Activated T-helper 1 cell treated with anti-CD3 and anti-CD28 coated beads, Interleukin-12 subunit alpha, Interleukin-12 subunit beta, Interleukin-2, Interleukin-4 antibody, amounts not matched to agents 30 ng/mL and 10 ng/mL and 1 ng/mL, durations not matched to agents 14 hours and 24 hours and 36 hours (primary cell): ENCODE measurements at regions of chr19 and their contacts with region 1.

Region 1: GRCh38 chr19:54882758-54883157 is 8.7 kb downstream of the FCAR start:
- DNase-seq: peak; percentile 4
- H3K4me3 Mint-ChIP-seq: peak overlapping the region; percentile 56
- H3K27ac Mint-ChIP-seq: no peak overlapping the region
- H3K4me1 Mint-ChIP-seq: peaks cover 12% of the 10 kb centered on the region
- H3K27me3 Mint-ChIP-seq: peaks cover 5% of the 10 kb centered on the region

Region 2: GRCh38 chr19:54439174-54439853 is 443.4 kb before region 1 on chr19:
- intact Hi-C with region 1: no loop called
- DNase-seq: no peak
- H3K4me3 Mint-ChIP-seq: no peak overlapping the region
- H3K27ac Mint-ChIP-seq: no peak overlapping the region
- H3K4me1 Mint-ChIP-seq: peaks cover 7% of the 10 kb centered on the region
- H3K27me3 Mint-ChIP-seq: no peaks in the 10 kb centered on the region

Region 3: DNA sequence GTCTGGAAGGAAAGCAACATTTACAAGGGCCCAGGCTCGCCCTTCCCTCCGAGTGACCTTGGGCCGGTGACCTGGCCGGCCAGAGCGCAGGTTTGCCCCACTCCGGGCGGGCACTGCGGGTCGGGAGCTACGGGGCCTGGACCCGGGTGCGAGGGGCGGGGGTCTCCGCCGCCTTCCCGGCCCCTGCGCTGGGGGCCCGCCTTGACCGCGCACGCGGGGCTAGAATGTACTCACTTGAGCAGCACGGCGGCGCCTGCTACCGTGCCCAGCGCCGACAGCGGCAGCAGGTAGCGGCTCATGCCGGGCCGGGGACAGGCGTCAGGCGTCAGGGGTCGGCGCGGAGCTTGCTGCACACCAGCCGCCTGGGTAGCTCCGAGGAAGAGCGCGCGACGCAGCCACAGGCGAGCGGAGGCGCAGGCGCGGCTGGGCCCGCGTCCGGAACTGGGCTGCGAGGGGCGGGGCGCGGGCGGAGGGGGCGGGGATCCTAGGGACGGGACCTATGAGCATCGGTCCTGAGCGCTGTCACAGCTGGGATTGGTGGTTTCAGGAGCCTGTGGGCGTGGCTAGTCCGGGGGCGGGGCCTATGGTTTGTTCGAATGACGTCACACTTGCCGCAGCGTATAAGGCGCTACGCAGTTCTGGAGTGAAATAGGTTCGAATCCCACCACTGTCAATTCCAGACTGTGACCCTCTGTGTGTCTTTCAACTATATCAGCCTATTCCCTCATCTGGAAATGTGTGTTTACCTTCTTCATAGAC is 180.2 kb after region 1 on chr19 and contains the start of gene RDH13:
- intact Hi-C with region 1: loop called (anchors 5 kb)
- DNase-seq: peak; percentile 96
- H3K4me3 Mint-ChIP-seq: peak within 1 kb of the TSS; percentile 89
- H3K27ac Mint-ChIP-seq: peak within 1 kb of the TSS; percentile 75
- H3K4me1 Mint-ChIP-seq: peaks cover 12% of the 10 kb centered on the region
- H3K27me3 Mint-ChIP-seq: peaks cover 18% of the 10 kb centered on the region
- total RNA-seq, gene RDH13: 21.7 and 26.4 TPM in 2 replicates

Region 4: DNA sequence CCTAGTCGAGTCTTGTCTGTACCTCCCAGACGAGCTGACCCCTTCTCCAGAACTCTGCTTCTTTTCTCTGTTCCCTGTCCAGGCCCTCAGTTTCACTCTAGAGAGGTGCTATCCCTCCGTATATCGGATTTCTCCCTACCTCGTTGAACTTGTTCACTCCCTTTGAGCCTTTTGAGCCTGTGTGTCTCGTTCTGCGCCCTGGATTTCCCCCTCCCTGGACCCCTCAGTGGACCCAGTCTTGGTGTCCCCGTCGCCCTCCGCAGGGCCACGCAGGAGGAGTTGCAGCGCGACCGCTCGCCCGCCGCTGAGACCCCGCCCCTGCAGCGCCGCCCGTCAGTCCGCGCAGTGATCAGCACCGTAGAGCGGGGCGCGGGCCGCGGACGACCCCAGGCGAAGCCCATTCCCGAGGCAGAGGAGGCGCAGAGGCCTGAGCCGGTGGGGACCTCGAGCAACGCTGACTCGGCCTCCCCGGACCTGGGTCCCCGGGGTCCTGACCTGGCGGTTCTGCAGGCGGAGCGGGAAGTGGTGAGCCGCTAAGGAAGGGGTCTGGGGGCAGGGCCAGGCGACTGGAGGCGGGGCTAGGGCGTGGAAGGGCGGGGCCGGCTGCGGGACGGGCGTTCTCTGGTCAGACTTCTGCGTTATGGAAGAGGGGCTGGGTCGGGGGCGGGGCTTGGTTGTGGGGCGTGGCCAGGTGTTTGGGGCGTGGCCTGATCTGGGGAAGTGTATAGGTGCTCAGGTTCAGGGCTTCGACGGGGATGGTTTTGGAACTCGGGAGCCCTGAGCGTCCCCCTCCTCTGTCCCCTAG is 198.4 kb after region 1 on chr19:
- intact Hi-C with region 1: loop called (anchors 5 kb)
- DNase-seq: peak; percentile 92
- H3K4me3 Mint-ChIP-seq: peak overlapping the region; percentile 88
- H3K27ac Mint-ChIP-seq: peak overlapping the region; percentile 67
- H3K4me1 Mint-ChIP-seq: peaks cover 23% of the 10 kb centered on the region
- H3K27me3 Mint-ChIP-seq: peaks cover 35% of the 10 kb centered on the region

Region 5: DNA sequence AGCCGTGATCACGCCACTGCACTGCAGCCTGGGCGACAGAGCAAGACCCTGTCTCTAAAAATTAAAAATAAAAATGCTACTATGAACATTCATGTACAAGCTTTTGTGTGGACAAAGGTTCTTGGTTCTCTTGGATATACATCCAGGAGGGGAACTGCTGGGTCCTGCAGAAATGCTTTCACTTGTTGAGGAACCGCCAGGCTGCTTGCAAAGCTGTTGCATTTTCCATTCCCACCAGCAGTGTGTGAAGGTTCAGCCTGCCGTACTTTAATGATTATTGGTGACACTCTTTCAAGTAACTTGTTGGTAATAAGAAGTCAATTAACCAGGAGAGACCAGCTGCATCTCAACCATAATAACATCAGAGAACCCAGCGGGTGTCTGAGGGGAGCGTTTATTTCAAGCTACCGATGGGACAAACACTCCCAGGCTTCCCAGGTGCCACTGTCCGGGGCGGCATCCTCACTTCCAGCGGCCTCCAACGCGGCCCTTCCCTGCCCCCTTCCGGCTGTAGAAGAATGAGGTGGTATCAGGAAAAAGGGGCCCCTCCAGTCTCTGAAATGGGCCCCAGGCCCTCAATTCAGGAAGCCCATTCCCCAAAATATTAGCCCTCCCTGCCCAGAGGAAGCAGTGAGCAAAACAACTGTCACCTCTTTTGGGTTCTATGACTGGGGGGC is 249.8 kb after region 1 on chr19:
- intact Hi-C with region 1: loop called (anchors 10 kb)
- DNase-seq: no peak
- H3K4me3 Mint-ChIP-seq: no peak overlapping the region
- H3K27ac Mint-ChIP-seq: no peak overlapping the region
- H3K4me1 Mint-ChIP-seq: no peaks in the 10 kb centered on the region
- H3K27me3 Mint-ChIP-seq: peaks cover 21% of the 10 kb centered on the region

Region 6: GRCh38 chr19:55160128-55160985 is 277.6 kb after region 1 on chr19:
- intact Hi-C with region 1: loop called (anchors 1 kb)
- DNase-seq: peak; percentile 86
- H3K4me3 Mint-ChIP-seq: no peak overlapping the region
- H3K27ac Mint-ChIP-seq: no peak overlapping the region
- H3K4me1 Mint-ChIP-seq: no peaks in the 10 kb centered on the region
- H3K27me3 Mint-ChIP-seq: peaks cover 46% of the 10 kb centered on the region

Region 7: GRCh38 chr19:55166530-55167268 is 283.9 kb after region 1 on chr19 and contains the start of gene DNAAF3:
- intact Hi-C with region 1: loop called (anchors 2 kb)
- DNase-seq: peak; percentile 76
- H3K4me3 Mint-ChIP-seq: peak within 1 kb of the TSS; percentile 84
- H3K27ac Mint-ChIP-seq: peak within 1 kb of the TSS; percentile 32
- H3K4me1 Mint-ChIP-seq: peaks cover 12% of the 10 kb centered on the region
- H3K27me3 Mint-ChIP-seq: peaks cover 57% of the 10 kb centered on the region
- total RNA-seq, gene DNAAF3: 0.36 TPM in 1 of 2 replicates, not detected in the other

Region 8: DNA sequence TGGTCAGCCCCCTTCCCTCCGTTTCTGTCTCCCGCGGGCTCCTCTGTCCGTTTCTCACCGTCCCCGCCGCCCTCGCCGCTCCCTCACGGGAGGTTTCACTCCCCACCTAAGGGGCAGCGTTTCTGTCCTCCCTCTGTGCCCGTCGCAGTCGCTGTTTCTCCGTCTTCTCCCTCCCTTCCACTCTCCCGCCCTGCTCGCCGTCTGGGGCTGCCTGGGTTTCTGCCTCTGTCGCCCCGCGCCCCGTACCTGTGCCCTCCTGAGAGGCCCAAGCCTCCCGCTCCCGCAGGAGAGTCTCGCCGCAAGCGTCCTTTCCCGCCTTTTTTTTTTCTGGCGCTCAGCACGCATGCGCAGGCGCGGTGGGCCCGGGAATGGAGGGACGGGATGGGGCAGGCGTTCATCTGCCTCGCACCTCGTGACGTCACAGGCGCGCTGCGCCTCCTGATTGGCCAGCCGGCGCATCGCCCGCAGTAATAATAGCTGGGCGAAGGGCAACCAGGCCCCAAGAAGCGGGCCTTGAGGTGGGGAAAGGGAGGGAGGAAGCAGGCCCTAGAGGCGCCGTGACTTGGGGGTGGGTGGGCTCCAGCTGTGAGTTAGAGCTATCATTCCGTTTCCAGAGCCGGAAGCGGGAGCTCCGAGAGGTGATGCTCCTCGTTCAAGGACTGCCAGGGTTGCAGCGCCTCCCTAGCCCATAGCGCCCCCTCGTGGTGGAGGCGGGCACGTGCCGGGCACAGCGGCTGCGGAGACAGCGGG is 620.9 kb after region 1 on chr19:
- intact Hi-C with region 1: loop called (anchors 5 kb)
- DNase-seq: peak; percentile 89
- H3K4me3 Mint-ChIP-seq: peak overlapping the region; percentile 78
- H3K27ac Mint-ChIP-seq: peak overlapping the region; percentile 82
- H3K4me1 Mint-ChIP-seq: peaks cover 24% of the 10 kb centered on the region
- H3K27me3 Mint-ChIP-seq: peaks cover 4% of the 10 kb centered on the region